ENCODE measurements at regions of chr6 and their contacts with region 1.

Region 1: GRCh38 chr6:11804135-11804534 is 25.5 kb upstream of the ADTRP start:
- DNase-seq: no peak
- H3K4me3 ChIP-seq: no peak overlapping the region
- CTCF ChIP-seq: no peak

Region 2: GRCh38 chr6:11738661-11739375 is 65.3 kb before region 1 on chr6:
- in situ Hi-C with region 1: no loop called
- DNase-seq: no peak
- H3K4me3 ChIP-seq: no peak overlapping the region
- CTCF ChIP-seq: no peak

Region 3: GRCh38 chr6:11835065-11835464 is 30.9 kb after region 1 on chr6:
- in situ Hi-C with region 1: loop called (anchors 5 kb)
- DNase-seq: no peak
- H3K4me3 ChIP-seq: no peak overlapping the region
- CTCF ChIP-seq: no peak

Region 4: GRCh38 chr6:11869672-11870340 is 65.7 kb after region 1 on chr6:
- in situ Hi-C with region 1: no loop called
- DNase-seq: peak; percentile 74
- H3K4me3 ChIP-seq: no peak overlapping the region
- CTCF ChIP-seq: no peak